ENCODE measurements at regions of chr20 and their contacts with region 1.

Region 1: DNA sequence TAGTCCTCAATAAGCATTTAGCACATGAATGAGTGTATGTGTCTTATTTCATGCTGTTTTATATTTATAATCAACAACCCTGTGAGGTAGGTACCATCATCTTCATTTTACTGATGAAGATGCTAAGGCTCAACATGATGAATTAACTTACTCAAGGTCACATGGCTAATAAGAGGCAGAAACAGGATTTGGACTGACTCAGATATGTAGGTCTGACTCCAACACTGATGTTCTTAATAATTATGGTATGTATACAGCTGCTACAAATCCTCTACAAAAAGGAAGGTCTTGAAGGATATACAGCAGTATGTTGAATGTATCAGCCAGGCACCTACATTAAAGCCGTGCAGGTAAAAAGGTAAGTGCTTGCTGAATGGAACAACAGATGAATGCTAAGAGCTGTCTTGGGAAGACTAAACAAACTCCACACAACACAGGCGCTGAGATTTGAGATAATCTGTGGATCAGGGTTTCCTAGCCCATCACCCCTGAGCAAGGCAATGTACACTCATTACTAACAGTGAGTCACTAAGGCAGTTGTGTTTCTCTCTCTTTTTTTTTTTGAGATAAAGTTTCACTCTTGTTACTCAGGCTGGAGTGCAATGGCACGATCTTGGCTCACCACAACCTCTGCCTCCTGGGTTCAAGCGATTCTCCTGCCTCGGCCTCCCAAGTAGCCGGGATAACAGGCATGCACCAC is 31.9 kb downstream of the TTI1 start:
- DNase-seq: peak; percentile 76
- H3K4me3 ChIP-seq: no peak overlapping the region
- H3K27ac ChIP-seq: peak overlapping the region; percentile 40
- H3K4me1 ChIP-seq: peaks cover 21% of the 10 kb centered on the region
- H3K27me3 ChIP-seq: no peaks in the 10 kb centered on the region
- CTCF ChIP-seq: no peak
- POLR2A ChIP-seq: no peak

Region 2: DNA sequence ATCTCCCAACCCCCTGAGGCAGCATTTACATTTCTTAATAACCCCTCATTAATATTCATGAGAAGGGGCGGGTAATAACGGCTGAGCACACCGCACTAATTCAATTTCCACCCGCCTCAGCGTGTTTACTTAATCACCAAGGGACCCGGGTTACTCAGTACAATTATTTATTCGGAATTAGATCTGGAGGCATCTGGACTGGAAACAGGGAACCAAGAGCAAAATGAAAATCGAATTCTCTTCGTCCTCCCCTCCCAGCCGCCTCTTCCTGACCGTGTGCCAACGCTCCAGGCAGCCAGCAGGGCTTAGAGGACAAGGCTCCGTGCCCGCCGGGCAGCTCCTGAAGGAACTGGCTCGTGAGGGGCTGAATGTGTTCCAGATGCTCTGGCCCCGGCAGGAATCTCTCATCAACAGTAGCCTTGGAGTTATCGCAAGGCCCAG is 331.0 kb before region 1 on chr20:
- CTCF ChIA-PET with region 1: no interaction called
- POLR2A ChIA-PET with region 1: no interaction called
- dilution Hi-C with region 1: no loop called
- intact Hi-C with region 1: no loop called
- DNase-seq: no peak
- H3K4me3 ChIP-seq: no peak overlapping the region
- H3K27ac ChIP-seq: no peak overlapping the region
- H3K4me1 ChIP-seq: no peaks in the 10 kb centered on the region
- H3K27me3 ChIP-seq: peaks cover 14 to 27% of the 10 kb centered on the region in 2 experiments
- CTCF ChIP-seq: no peak
- POLR2A ChIP-seq: no peak

Region 3: GRCh38 chr20:37958856-37959520 is 42.3 kb before region 1 on chr20:
- CTCF ChIA-PET with region 1: no interaction called
- POLR2A ChIA-PET with region 1: no interaction called
- dilution Hi-C with region 1: no loop called
- intact Hi-C with region 1: no loop called
- DNase-seq: no peak
- H3K4me3 ChIP-seq: no peak overlapping the region
- H3K27ac ChIP-seq: no peak overlapping the region
- H3K4me1 ChIP-seq: no peaks in the 10 kb centered on the region
- H3K27me3 ChIP-seq: peaks cover 21 to 40% of the 10 kb centered on the region in 2 experiments
- CTCF ChIP-seq: no peak
- POLR2A ChIP-seq: no peak

Region 4: DNA sequence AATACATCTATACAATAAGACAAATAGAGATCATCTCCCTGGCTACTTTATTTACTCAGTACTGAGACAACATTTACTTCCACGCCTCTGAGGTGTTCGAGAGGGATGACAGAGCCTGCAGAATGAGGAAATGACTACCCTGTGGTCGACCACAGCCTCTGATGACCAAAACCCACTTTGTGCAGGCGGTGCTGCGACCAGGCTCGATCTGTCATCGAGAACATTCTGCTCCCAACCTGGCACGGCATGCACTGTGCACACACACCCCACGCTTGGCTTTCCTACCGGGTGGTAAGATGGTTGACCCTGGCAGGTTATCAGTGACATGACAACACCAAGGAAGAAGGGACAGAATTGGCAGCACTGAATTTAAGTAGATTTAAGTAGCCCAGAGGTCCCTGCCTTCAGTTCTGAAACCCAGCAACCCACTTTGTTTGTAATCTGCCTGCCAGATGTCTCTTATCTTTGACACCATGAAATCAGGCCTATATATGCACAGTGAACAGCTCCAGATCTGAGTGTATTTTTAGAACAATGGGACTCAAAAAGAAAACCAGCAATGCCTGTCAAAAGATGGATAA is 10.7 kb before region 1 on chr20:
- CTCF ChIA-PET with region 1: interaction called, 17 read pairs
- POLR2A ChIA-PET with region 1: no interaction called
- dilution Hi-C with region 1: no loop called
- intact Hi-C with region 1: no loop called
- DNase-seq: peak; percentile 59
- H3K4me3 ChIP-seq: no peak overlapping the region
- H3K27ac ChIP-seq: peak overlapping the region; percentile 68
- H3K4me1 ChIP-seq: peaks cover 24% of the 10 kb centered on the region
- H3K27me3 ChIP-seq: no peaks in the 10 kb centered on the region
- CTCF ChIP-seq: no peak
- POLR2A ChIP-seq: no peak

Region 5: DNA sequence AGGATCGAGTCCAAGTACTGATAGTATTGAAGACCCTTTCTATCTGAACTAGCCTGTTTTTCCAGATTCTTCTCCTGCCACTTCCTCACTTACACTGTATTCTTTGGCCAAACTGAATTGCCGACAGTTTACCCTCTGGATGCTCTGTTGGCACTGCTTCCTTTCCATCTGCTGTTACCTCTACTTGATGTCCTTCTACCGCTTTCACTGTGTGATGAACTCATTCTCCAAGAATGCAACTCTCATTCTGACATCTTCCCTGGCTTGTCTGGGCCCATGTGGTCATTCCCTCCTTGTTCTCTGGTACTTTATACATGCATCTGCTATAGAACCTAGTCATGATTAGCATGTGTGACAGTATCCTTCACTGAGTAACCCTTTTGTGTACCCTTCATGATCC is 48.5 kb after region 1 on chr20:
- CTCF ChIA-PET with region 1: no interaction called
- POLR2A ChIA-PET with region 1: no interaction called
- dilution Hi-C with region 1: no loop called
- intact Hi-C with region 1: no loop called
- DNase-seq: peak; percentile 57
- H3K4me3 ChIP-seq: no peak overlapping the region
- H3K27ac ChIP-seq: peak overlapping the region; percentile 41
- H3K4me1 ChIP-seq: peaks cover 11% of the 10 kb centered on the region
- H3K27me3 ChIP-seq: no peaks in the 10 kb centered on the region
- CTCF ChIP-seq: no peak
- POLR2A ChIP-seq: no peak

Region 6: GRCh38 chr20:38127011-38127621 is 125.8 kb after region 1 on chr20:
- CTCF ChIA-PET with region 1: no interaction called
- POLR2A ChIA-PET with region 1: no interaction called
- dilution Hi-C with region 1: no loop called
- intact Hi-C with region 1: no loop called
- DNase-seq: peak; percentile 96
- H3K4me3 ChIP-seq: no peak overlapping the region
- H3K27ac ChIP-seq: peak overlapping the region; percentile 60
- H3K4me1 ChIP-seq: peaks cover 52% of the 10 kb centered on the region
- H3K27me3 ChIP-seq: no peaks in the 10 kb centered on the region
- CTCF ChIP-seq: no peak
- POLR2A ChIP-seq: peak; percentile 40

Measured in endothelial cell of umbilical vein (primary cell).